CD8-positive, alpha-beta T cell (primary cell): ENCODE measurements at regions of chr19 and their contacts with region 1.

Region 1: GRCh38 chr19:1652471-1653299 is at the start of gene TCF3:
- DNase-seq: peak; percentile 98 to 99 (median 99)
- ATAC-seq: peak; percentile 90
- H3K4me3 ChIP-seq: peak within 1 kb of the TSS; percentile 66 to 87
- H3K4me3 Mint-ChIP-seq: peak within 1 kb of the TSS; percentile 88
- H3K27ac ChIP-seq: peak within 1 kb of the TSS; percentile 97 to 100
- H3K27ac Mint-ChIP-seq: peak within 1 kb of the TSS; percentile 97
- H3K4me1 ChIP-seq: peaks cover 12% of the 10 kb centered on the region
- H3K4me1 Mint-ChIP-seq: peaks cover 10% of the 10 kb centered on the region
- H3K27me3 ChIP-seq: no peaks in the 10 kb centered on the region
- H3K27me3 Mint-ChIP-seq: no peaks in the 10 kb centered on the region
- CTCF ChIP-seq: no peak
- total RNA-seq, gene TCF3: 67.6 to 69.7 TPM

Region 2: GRCh38 chr19:1490311-1491113 is 162.2 kb before region 1 on chr19 and contains the start of gene PCSK4:
- CTCF ChIA-PET with region 1: no interaction called
- POLR2A ChIA-PET with region 1: interaction called, 3 read pairs
- intact Hi-C with region 1: loop called (anchors 1 to 5 kb)
- DNase-seq: peak; percentile 95 to 99 (median 97)
- ATAC-seq: peak; percentile 88
- H3K4me3 ChIP-seq: peak within 1 kb of the TSS; percentile 59 to 71
- H3K4me3 Mint-ChIP-seq: peak within 1 kb of the TSS; percentile 90
- H3K27ac ChIP-seq: peak within 1 kb of the TSS; percentile 35 to 57
- H3K27ac Mint-ChIP-seq: peak within 1 kb of the TSS; percentile 90
- H3K4me1 ChIP-seq: peaks cover 15% of the 10 kb centered on the region
- H3K4me1 Mint-ChIP-seq: peaks cover 16% of the 10 kb centered on the region
- H3K27me3 ChIP-seq: no peaks in the 10 kb centered on the region
- H3K27me3 Mint-ChIP-seq: no peaks in the 10 kb centered on the region
- CTCF ChIP-seq: no peak
- total RNA-seq, gene PCSK4: 5.4 to 6.1 TPM

Region 3: GRCh38 chr19:1618157-1619093 is 34.3 kb before region 1 on chr19:
- CTCF ChIA-PET with region 1: interaction called, 3 read pairs
- POLR2A ChIA-PET with region 1: no interaction called
- intact Hi-C with region 1: loop called in 1 of 2 experiments (anchors 2 kb)
- DNase-seq: peak in 3 of 9 experiments; percentile 26 to 46 (median 41)
- ATAC-seq: peak; percentile 56
- H3K4me3 ChIP-seq: no peak overlapping the region
- H3K4me3 Mint-ChIP-seq: no peak overlapping the region
- H3K27ac ChIP-seq: no peak overlapping the region
- H3K27ac Mint-ChIP-seq: peak overlapping the region; percentile 84
- H3K4me1 ChIP-seq: peaks cover 9% of the 10 kb centered on the region
- H3K4me1 Mint-ChIP-seq: peaks cover 15% of the 10 kb centered on the region
- H3K27me3 ChIP-seq: no peaks in the 10 kb centered on the region
- H3K27me3 Mint-ChIP-seq: no peaks in the 10 kb centered on the region
- CTCF ChIP-seq: no peak

Region 4: GRCh38 chr19:1812469-1813196 is 159.9 kb after region 1 on chr19:
- CTCF ChIA-PET with region 1: no interaction called
- POLR2A ChIA-PET with region 1: no interaction called
- intact Hi-C with region 1: loop called (anchors 1 kb)
- DNase-seq: peak; percentile 62 to 91 (median 81)
- ATAC-seq: peak; percentile 76
- H3K4me3 ChIP-seq: peak overlapping the region; percentile 72 to 77
- H3K4me3 Mint-ChIP-seq: peak overlapping the region; percentile 91
- H3K27ac ChIP-seq: peak overlapping the region; percentile 34 to 45
- H3K27ac Mint-ChIP-seq: peak overlapping the region; percentile 87
- H3K4me1 ChIP-seq: peaks cover 12% of the 10 kb centered on the region
- H3K4me1 Mint-ChIP-seq: peaks cover 13% of the 10 kb centered on the region
- H3K27me3 ChIP-seq: no peaks in the 10 kb centered on the region
- H3K27me3 Mint-ChIP-seq: no peaks in the 10 kb centered on the region
- CTCF ChIP-seq: peak; percentile 65

Region 5: DNA sequence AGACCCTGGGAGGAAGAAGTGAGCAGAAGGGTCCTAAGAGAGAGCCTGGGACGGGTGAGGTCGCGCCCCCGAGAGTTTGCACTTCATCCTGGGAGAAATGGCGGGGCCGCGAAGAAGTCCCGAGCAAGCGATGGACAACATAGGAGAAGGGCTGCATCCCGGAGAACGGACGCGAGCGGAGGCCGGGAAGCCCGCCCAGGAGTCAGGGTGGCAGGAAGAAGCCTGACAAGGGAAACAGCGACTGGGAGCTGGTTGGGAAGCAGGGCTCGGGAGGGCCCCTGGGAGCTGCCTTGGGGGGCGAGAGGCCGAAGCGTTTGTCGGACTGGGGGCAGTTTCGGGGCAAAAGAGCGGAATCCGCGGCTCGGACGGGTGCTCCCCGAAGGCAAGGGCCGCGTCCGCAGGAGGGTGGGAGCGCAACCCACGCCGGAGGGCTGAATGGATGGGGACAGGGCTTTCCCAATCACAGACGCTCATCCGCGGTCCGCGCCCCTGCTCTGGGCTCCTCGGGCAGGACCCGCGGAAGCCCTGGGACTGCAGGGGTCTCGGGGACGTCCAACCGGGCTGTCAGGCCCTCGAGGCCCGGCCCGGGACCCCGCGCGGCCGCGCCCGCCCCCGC is 232.1 kb after region 1 on chr19:
- CTCF ChIA-PET with region 1: no interaction called
- POLR2A ChIA-PET with region 1: no interaction called
- intact Hi-C with region 1: no loop called
- DNase-seq: peak in 3 of 9 experiments; percentile 41 to 51 (median 48)
- ATAC-seq: no peak
- H3K4me3 ChIP-seq: peak overlapping the region; percentile 77 to 100
- H3K4me3 Mint-ChIP-seq: peak overlapping the region; percentile 100
- H3K27ac ChIP-seq: peak overlapping the region; percentile 92
- H3K27ac Mint-ChIP-seq: peak overlapping the region; percentile 99
- H3K4me1 ChIP-seq: peaks cover 40% of the 10 kb centered on the region
- H3K4me1 Mint-ChIP-seq: peaks cover 38% of the 10 kb centered on the region
- H3K27me3 ChIP-seq: no peaks in the 10 kb centered on the region
- H3K27me3 Mint-ChIP-seq: no peaks in the 10 kb centered on the region
- CTCF ChIP-seq: no peak

Region 6: GRCh38 chr19:2900296-2901252 is 1247.9 kb after region 1 on chr19 and contains the start of gene ZNF57:
- CTCF ChIA-PET with region 1: no interaction called
- POLR2A ChIA-PET with region 1: no interaction called
- intact Hi-C with region 1: loop called in 1 of 2 experiments (anchors 5 kb)
- DNase-seq: peak; percentile 92 to 99 (median 98)
- ATAC-seq: peak; percentile 96
- H3K4me3 ChIP-seq: peak within 1 kb of the TSS; percentile 85 to 90
- H3K4me3 Mint-ChIP-seq: peak within 1 kb of the TSS; percentile 97
- H3K27ac ChIP-seq: peak within 1 kb of the TSS; percentile 37 to 50
- H3K27ac Mint-ChIP-seq: peak within 1 kb of the TSS; percentile 86
- H3K4me1 ChIP-seq: peaks cover 10% of the 10 kb centered on the region
- H3K4me1 Mint-ChIP-seq: peaks cover 27% of the 10 kb centered on the region
- H3K27me3 ChIP-seq: no peaks in the 10 kb centered on the region
- H3K27me3 Mint-ChIP-seq: no peaks in the 10 kb centered on the region
- CTCF ChIP-seq: no peak
- total RNA-seq, gene ZNF57: 0.72 to 1.5 TPM